Activated T-helper 2 cell treated with anti-CD3 and anti-CD28 coated beads, Interferon-gamma antibody, Interleukin-2, Interleukin-4, amounts not matched to agents 10 μg/mL and 5 μg/mL and 100 μg/mL, durations not matched to agents 14 hours and 24 hours and 36 hours (primary cell): ENCODE measurements at regions of chr11 and their contacts with region 1.

Region 1: GRCh38 chr11:122743949-122744348 is 88.4 kb downstream of the UBASH3B start:
- DNase-seq: peak; percentile 75
- H3K4me3 Mint-ChIP-seq: no peak overlapping the region
- H3K27ac Mint-ChIP-seq: no peak overlapping the region
- H3K4me1 Mint-ChIP-seq: peaks cover 40% of the 10 kb centered on the region
- H3K27me3 Mint-ChIP-seq: peaks cover 10% of the 10 kb centered on the region

Region 2: GRCh38 chr11:122655527-122656072 is 88.3 kb before region 1 on chr11 and contains the start of gene UBASH3B:
- intact Hi-C with region 1: loop called (anchors 2 kb)
- DNase-seq: peak; percentile 55
- H3K4me3 Mint-ChIP-seq: peak within 1 kb of the TSS; percentile 94
- H3K27ac Mint-ChIP-seq: peak within 1 kb of the TSS; percentile 81
- H3K4me1 Mint-ChIP-seq: peaks cover 9% of the 10 kb centered on the region
- H3K27me3 Mint-ChIP-seq: peaks cover 61% of the 10 kb centered on the region
- total RNA-seq, gene UBASH3B: 19.3 and 20.1 TPM in 2 replicates

Region 3: GRCh38 chr11:122690801-122691548 is 53.0 kb before region 1 on chr11:
- intact Hi-C with region 1: loop called (anchors 1 kb)
- DNase-seq: no peak
- H3K4me3 Mint-ChIP-seq: peak overlapping the region; percentile 23
- H3K27ac Mint-ChIP-seq: peak overlapping the region; percentile 56
- H3K4me1 Mint-ChIP-seq: peaks cover 51% of the 10 kb centered on the region
- H3K27me3 Mint-ChIP-seq: no peaks in the 10 kb centered on the region

Region 4: GRCh38 chr11:122697636-122698167 is 46.2 kb before region 1 on chr11:
- intact Hi-C with region 1: loop called (anchors 1 kb)
- DNase-seq: peak; percentile 38
- H3K4me3 Mint-ChIP-seq: peak overlapping the region; percentile 68
- H3K27ac Mint-ChIP-seq: peak overlapping the region; percentile 88
- H3K4me1 Mint-ChIP-seq: peaks cover 53% of the 10 kb centered on the region
- H3K27me3 Mint-ChIP-seq: no peaks in the 10 kb centered on the region

Region 5: GRCh38 chr11:122723576-122723975 is 20.4 kb before region 1 on chr11:
- intact Hi-C with region 1: loop called (anchors 1 kb)
- DNase-seq: no peak
- H3K4me3 Mint-ChIP-seq: peak overlapping the region; percentile 47
- H3K27ac Mint-ChIP-seq: peak overlapping the region; percentile 88
- H3K4me1 Mint-ChIP-seq: peaks cover 56% of the 10 kb centered on the region
- H3K27me3 Mint-ChIP-seq: peaks cover 13% of the 10 kb centered on the region